A549 (cell line): ENCODE measurements at regions of chr2 and their contacts with region 1.

Region 1: GRCh38 chr2:58131191-58132011 is 84.8 kb downstream of the VRK2 start:
- DNase-seq: no peak
- ATAC-seq: peak; percentile 69 to 70; a peak in 5 of 6 replicates
- H3K4me3 ChIP-seq: no peak overlapping the region
- H3K27ac ChIP-seq: peak overlapping the region in 1 of 2 experiments; percentile 22; a peak in 2 of 6 replicates
- H3K4me1 ChIP-seq: peaks cover 18% of the 10 kb centered on the region; the same call in 2 of the 3 replicates
- CTCF ChIP-seq: peak; percentile 67
- EP300 ChIP-seq: no peak
- POLR2A ChIP-seq: no peak
- RAD21 ChIP-seq: peak; percentile 74 to 78

Region 2: GRCh38 chr2:58120626-58121229 is 10.7 kb before region 1 on chr2:
- CTCF ChIA-PET with region 1: interaction called, 6 read pairs
- POLR2A ChIA-PET with region 1: interaction called, 12 read pairs
- DNase-seq: no peak
- ATAC-seq: peak; percentile 42 to 56; a peak in 2 of 6 replicates
- H3K4me3 ChIP-seq: no peak overlapping the region
- H3K27ac ChIP-seq: peak overlapping the region in 1 of 2 experiments; percentile 87; a peak in 3 of 6 replicates
- H3K4me1 ChIP-seq: peaks cover 34% of the 10 kb centered on the region
- CTCF ChIP-seq: no peak
- EP300 ChIP-seq: no peak
- POLR2A ChIP-seq: no peak
- RAD21 ChIP-seq: no peak